Mammary epithelial cell (primary cell): ENCODE measurements at regions of chr16 and their contacts with region 1.

Region 1: DNA sequence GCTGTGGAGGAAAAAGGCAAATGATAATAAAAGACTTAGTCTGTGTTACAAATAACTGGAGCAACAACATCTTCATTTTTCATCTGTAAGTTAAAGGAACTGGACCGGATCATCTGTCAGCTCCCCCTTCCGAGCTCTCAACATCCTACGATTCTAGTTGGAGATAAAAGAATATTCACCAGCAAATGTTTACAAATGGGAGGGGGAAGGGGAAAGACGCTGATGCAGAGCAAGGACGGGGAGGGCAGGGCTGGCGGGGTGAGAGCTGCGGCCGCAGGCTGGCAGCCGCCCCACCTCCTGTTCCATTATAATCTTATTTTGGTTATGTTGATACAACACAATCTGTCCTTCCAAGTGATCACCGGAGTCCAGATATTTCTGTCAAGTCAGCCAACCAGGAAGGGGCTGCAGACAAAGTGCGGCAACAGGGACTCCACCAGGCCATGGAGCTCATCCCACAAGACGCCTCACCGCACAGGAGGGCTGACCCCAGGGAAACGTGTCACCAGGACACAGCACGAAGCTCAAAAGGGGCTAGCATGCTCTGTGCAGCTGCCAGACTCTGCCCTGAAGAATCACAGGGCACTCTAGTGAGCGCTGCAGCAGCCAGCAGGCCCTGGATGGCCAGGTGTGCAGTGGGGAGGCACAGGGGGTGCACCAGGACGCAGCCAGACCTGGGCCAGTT is 19.7 kb downstream of the FBXO31 start:
- DNase-seq: no peak
- H3K4me3 ChIP-seq: no peak overlapping the region
- H3K27ac ChIP-seq: no peak overlapping the region
- H3K4me1 ChIP-seq: no peaks in the 10 kb centered on the region
- H3K27me3 ChIP-seq: no peaks in the 10 kb centered on the region
- CTCF ChIP-seq: no peak

Region 2: DNA sequence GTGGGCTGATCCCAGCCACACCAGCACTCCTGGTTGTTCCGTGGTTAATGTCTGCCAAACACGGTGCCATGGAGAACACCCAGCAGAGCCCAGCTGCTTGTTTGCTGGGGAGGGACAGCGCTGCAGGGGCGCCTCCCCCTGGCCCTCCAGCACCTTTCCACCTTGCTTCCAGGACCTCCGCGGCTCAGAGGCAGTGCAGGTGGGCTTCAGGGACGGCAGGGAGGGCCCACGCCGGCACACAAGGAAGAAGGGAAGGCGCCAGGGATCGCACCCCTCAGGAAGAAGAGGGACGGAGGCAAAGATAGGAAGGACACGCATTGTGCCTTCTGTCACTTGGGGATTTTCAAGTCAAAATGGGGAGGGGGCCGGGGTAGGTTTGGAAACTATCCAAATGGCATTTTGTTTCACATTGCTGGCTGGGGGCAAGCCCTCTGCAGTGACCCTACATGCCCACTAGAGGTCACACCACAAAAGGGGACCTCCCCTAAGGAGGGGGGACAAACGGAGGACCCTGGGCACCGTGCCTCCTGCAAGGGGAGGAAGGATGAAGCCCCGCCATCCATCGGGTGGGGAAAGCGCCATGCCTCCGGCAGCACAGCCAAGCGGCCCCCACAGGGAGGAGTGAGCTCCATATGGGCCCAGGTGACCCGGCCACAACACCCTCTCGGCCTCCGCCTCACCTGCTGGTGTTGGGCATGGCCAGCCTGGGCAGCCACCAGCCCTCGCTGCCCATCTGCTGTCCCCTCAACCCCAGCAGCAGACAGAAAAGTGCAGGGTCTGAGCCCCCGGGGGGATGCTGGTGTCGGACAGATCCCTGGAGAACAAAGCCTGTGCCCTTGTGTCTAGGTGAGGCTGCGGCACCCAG is 39.3 kb before region 1 on chr16:
- CTCF ChIA-PET with region 1: no interaction called
- dilution Hi-C with region 1: loop called (anchors 5 kb)
- in situ Hi-C with region 1: no loop called
- intact Hi-C with region 1: no loop called
- DNase-seq: no peak
- H3K4me3 ChIP-seq: no peak overlapping the region
- H3K27ac ChIP-seq: no peak overlapping the region
- H3K4me1 ChIP-seq: peaks cover 12% of the 10 kb centered on the region
- H3K27me3 ChIP-seq: no peaks in the 10 kb centered on the region
- CTCF ChIP-seq: peak; percentile 60 to 71